Left cardiac atrium (tissue), 4 donors: ENCODE measurements at regions of chr2 and their contacts with region 1.

Region 1: DNA sequence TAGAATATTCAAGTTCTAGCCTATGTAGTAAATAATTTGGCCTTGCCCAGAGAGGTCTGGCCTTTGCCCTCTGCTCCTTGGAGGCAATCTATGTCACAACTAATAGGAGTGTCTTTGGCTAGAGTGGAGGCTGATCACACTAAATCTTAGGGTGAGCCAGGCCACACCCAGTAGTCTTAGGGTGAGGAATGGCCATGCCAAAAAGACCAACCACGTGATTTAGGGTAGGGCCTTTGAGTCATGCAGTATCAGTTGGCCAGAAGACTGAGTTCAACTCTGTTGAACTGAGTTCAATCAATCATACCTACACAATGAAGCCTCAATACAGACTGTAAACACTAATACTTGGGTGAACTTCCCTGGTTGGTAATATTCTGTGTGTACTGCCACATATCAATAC is 26.0 kb upstream of the FLACC1 start:
- DNase-seq: no peak
- ATAC-seq: no peak

Region 2: DNA sequence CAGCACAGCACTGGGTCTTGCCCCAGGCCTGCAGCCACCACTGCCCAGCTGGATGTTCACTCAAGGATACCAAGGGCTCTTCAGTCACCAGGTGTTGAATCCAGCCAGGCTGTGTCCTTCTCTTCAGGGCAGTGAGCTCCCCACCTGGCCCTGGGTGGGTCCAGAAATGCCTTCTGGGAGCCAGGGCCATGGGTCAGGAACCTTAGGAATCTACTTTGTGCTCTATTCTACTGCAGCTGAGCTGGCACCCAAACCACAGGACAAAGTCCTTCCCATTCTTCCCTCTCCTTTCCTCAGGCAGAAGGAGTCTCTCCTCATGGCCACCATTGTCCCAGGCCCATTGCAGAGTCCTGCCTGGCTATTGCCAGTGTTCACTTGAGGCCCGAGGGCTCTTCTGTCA is 81.4 kb after region 1 on chr2:
- intact Hi-C with region 1: loop called in 1 of 2 experiments (anchors 5 kb)
- DNase-seq: no peak
- ATAC-seq: no peak

Region 3: DNA sequence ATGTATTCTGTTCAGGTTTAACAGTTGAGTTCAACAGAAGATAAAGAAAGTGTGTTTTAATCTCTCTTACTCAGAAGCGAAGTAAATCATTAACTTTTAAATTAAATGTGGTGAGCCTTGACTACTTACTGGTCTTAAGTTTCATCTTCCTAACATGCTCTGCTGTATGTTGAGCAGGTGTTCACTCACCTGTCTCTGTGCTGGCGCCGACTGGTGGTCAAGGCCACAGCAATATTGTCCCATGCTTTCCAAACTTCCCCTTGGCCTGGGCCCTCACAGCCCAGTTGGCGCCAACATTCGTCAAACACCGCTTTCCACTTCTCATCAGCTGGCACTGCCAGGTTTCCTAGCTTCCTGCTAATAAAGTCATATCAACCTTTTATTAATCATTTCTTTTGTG is 332.3 kb after region 1 on chr2:
- intact Hi-C with region 1: loop called in 1 of 2 experiments (anchors 10 kb)
- DNase-seq: no peak
- ATAC-seq: no peak